H1 (cell line): ENCODE measurements at regions of chr2 and their contacts with region 1.

Region 1: DNA sequence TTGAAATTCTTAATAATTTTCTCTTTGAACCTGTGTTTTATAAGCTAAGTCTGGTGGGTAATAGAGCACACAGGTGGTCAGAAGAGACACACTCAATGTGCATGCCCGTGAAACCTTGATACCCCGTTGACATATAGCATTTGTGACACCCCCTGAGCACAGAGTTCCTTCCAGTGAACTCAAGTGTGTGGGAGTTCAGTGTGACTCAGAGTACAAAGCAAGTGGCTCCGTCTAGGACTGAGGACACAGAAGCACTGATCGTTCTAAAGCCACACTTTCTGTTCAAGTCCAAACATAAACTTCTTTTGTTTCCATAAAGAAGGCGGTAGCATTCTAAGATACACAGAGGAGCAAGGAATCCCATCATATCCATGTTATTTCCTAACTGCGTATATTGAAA is 523.6 kb downstream of the PID1 start:
- DNase-seq: no peak
- H3K4me3 ChIP-seq: no peak overlapping the region
- H3K27ac ChIP-seq: no peak overlapping the region
- H3K4me1 ChIP-seq: no peaks in the 10 kb centered on the region
- H3K27me3 ChIP-seq: no peaks in the 10 kb centered on the region
- CTCF ChIP-seq: no peak
- EP300 ChIP-seq: no peak
- POLR2A ChIP-seq: no peak
- RAD21 ChIP-seq: no peak

Region 2: DNA sequence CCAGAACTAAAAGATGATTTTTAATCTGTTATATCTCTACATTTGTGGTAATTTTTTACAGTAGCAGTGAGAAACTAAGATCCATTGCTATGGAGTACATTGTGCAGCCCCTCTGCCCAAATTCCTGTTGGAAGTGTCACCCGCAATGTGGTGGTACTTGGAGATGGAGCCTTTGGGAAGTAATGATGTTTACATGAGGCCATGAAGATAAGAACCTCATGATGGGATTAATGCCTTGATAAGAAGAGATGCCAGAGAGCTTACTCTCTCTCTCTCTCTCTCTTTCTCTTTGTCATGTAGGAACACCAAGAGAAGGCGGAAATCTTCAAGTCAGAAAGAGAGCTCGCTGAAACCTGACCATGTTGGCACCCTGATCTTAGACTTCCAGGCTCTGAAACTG is 11.8 kb before region 1 on chr2:
- CTCF ChIA-PET with region 1: interaction called, 20 read pairs
- POLR2A ChIA-PET with region 1: no interaction called
- DNase-seq: no peak
- H3K4me3 ChIP-seq: no peak overlapping the region
- H3K27ac ChIP-seq: no peak overlapping the region
- H3K4me1 ChIP-seq: no peaks in the 10 kb centered on the region
- H3K27me3 ChIP-seq: no peaks in the 10 kb centered on the region
- CTCF ChIP-seq: no peak
- EP300 ChIP-seq: no peak
- POLR2A ChIP-seq: no peak
- RAD21 ChIP-seq: no peak

Region 3: DNA sequence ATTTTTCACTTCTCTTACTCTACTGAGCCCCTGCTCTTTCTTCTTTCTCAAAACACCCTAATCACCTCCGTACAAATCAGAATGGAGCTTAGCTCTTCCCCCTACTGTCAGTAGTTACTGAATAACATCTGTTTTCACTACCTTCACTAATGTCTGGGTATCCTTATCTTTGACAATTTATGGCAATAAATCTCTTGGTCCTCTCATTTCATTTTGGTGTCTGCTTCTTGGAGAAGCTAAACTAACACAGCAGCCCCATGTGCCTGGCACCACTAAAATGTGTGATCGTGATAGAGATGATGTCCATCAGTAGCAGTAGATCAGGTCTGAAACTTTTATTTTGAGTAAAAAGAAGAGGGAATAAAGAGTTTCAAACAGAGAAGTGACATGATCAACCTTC is 27.1 kb after region 1 on chr2:
- CTCF ChIA-PET with region 1: interaction called, 10 read pairs
- POLR2A ChIA-PET with region 1: no interaction called
- DNase-seq: no peak
- H3K4me3 ChIP-seq: no peak overlapping the region
- H3K27ac ChIP-seq: no peak overlapping the region
- H3K4me1 ChIP-seq: no peaks in the 10 kb centered on the region
- H3K27me3 ChIP-seq: no peaks in the 10 kb centered on the region
- CTCF ChIP-seq: no peak
- EP300 ChIP-seq: no peak
- POLR2A ChIP-seq: no peak
- RAD21 ChIP-seq: no peak